ENCODE measurements at regions of chr1 and their contacts with region 1.

Region 1: GRCh38 chr1:86704458-86704971 is at the start of gene SH3GLB1:
- DNase-seq: peak; percentile 81 to 93 (median 91)
- H3K4me3 ChIP-seq: peak within 1 kb of the TSS; percentile 88
- H3K4me3 Mint-ChIP-seq: peak within 1 kb of the TSS; percentile 93 to 100 (median 99)
- H3K27ac ChIP-seq: peak within 1 kb of the TSS; percentile 90
- H3K27ac Mint-ChIP-seq: peak within 1 kb of the TSS; percentile 89 to 99 (median 99)
- H3K4me1 ChIP-seq: peaks cover 32% of the 10 kb centered on the region
- H3K4me1 Mint-ChIP-seq: peaks cover 46 to 66% (median 53%) of the 10 kb centered on the region in 3 donors
- H3K27me3 ChIP-seq: no peaks in the 10 kb centered on the region
- H3K27me3 Mint-ChIP-seq: no peaks in the 10 kb centered on the region
- total RNA-seq, gene SH3GLB1: 66.3 to 69.7 TPM

Region 2: DNA sequence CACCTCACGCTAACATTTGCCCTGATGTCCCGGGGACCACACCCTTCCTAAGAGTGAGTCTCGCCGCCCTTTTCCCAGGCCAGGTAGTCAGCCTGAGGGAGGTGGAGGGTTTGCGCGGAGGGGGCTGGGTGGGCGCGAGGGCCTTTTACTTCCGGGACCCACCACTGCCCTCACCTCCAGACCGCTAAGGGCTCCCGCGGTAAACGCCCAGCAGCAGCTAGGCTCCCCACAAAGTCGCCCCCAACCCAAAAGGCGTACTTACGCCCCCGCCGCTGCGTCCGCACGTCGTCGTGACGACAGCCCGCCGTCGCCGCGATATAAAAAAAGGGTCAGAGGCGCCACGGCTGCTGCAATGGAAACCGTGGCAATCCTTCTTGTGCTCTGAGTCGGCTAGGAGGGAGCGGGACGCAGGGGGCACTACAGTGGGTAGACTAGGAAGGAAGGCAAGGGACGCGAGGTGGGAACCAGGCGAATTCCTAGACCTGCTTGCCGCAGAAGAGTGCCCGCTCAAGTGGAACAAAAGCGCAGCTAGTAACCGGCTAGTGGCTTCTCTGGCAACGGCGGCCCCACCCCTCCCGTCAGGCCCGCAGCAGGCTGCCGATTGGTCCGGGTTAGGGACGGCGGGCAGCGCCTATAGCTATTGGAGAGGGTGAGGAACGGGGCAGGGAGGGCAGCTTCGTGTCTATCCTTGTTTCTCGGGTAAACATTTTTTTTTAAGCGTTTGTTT is 308.6 kb before region 1 on chr1 and contains the start of gene ODF2L:
- CTCF ChIA-PET with region 1: interaction called, 5 read pairs
- POLR2A ChIA-PET with region 1: interaction called, 15 read pairs
- DNase-seq: peak; percentile 83 to 93 (median 89)
- H3K4me3 ChIP-seq: peak within 1 kb of the TSS; percentile 79
- H3K4me3 Mint-ChIP-seq: peak within 1 kb of the TSS; percentile 95 to 100 (median 98)
- H3K27ac ChIP-seq: peak within 1 kb of the TSS; percentile 81
- H3K27ac Mint-ChIP-seq: peak within 1 kb of the TSS; percentile 85 to 99 (median 98)
- H3K4me1 ChIP-seq: peaks cover 21% of the 10 kb centered on the region
- H3K4me1 Mint-ChIP-seq: peaks cover 56 to 68% (median 59%) of the 10 kb centered on the region in 3 donors
- H3K27me3 ChIP-seq: no peaks in the 10 kb centered on the region
- H3K27me3 Mint-ChIP-seq: no peaks in the 10 kb centered on the region
- total RNA-seq, gene ODF2L: 27.6 to 30.1 TPM

Region 3: GRCh38 chr1:86563849-86564248 is 140.7 kb before region 1 on chr1:
- CTCF ChIA-PET with region 1: no interaction called
- POLR2A ChIA-PET with region 1: no interaction called
- DNase-seq: no peak
- H3K4me3 ChIP-seq: no peak overlapping the region
- H3K4me3 Mint-ChIP-seq: no peak overlapping the region
- H3K27ac ChIP-seq: no peak overlapping the region
- H3K27ac Mint-ChIP-seq: no peak overlapping the region
- H3K4me1 ChIP-seq: no peaks in the 10 kb centered on the region
- H3K4me1 Mint-ChIP-seq: no peaks in the 10 kb centered on the region
- H3K27me3 ChIP-seq: no peaks in the 10 kb centered on the region
- H3K27me3 Mint-ChIP-seq: peaks cover 8 to 40% of the 10 kb centered on the region in 2 donors

Region 4: GRCh38 chr1:86692636-86693035 is 11.9 kb before region 1 on chr1:
- CTCF ChIA-PET with region 1: interaction called, 12 read pairs
- POLR2A ChIA-PET with region 1: no interaction called
- DNase-seq: no peak
- H3K4me3 ChIP-seq: no peak overlapping the region
- H3K4me3 Mint-ChIP-seq: no peak overlapping the region
- H3K27ac ChIP-seq: no peak overlapping the region
- H3K27ac Mint-ChIP-seq: no peak overlapping the region
- H3K4me1 ChIP-seq: no peaks in the 10 kb centered on the region
- H3K4me1 Mint-ChIP-seq: no peaks in the 10 kb centered on the region
- H3K27me3 ChIP-seq: no peaks in the 10 kb centered on the region
- H3K27me3 Mint-ChIP-seq: peaks cover 1 to 3% of the 10 kb centered on the region in 2 donors

Region 5: DNA sequence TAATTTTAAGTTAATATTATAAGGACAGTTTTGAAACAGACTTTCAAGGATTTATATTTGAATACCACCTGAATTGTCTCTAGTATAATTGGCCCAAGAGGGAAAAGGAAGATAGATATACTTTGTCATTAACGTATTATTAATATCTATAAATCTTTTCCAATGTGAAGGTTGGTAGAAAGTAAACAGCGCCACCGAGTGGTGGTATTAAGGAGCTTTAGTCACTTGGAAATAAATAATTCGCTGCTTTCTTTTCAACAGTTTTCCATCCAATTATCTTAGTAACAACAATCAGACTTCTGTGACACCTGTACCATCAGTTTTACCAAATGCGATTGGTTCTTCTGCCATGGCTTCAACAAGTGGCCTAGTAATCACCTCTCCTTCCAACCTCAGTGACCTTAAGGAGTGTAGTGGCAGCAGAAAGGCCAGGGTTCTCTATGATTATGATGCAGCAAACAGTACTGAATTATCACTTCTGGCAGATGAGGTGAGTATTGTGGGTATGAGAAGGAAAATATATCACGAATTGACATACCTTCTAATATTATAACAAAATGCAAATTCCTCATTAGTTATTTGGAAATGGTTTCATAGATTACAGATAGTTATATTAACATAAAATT is 37.5 kb after region 1 on chr1:
- CTCF ChIA-PET with region 1: interaction called, 17 read pairs
- POLR2A ChIA-PET with region 1: interaction called, 8 read pairs
- DNase-seq: peak; percentile 20 to 58 (median 29)
- H3K4me3 ChIP-seq: no peak overlapping the region
- H3K4me3 Mint-ChIP-seq: no peak overlapping the region
- H3K27ac ChIP-seq: no peak overlapping the region
- H3K27ac Mint-ChIP-seq: peak overlapping the region in 1 of 8 donors; percentile 54
- H3K4me1 ChIP-seq: peaks cover 11% of the 10 kb centered on the region
- H3K4me1 Mint-ChIP-seq: peaks cover 5 to 7% (median 5%) of the 10 kb centered on the region in 3 donors
- H3K27me3 ChIP-seq: no peaks in the 10 kb centered on the region
- H3K27me3 Mint-ChIP-seq: no peaks in the 10 kb centered on the region

Region 6: DNA sequence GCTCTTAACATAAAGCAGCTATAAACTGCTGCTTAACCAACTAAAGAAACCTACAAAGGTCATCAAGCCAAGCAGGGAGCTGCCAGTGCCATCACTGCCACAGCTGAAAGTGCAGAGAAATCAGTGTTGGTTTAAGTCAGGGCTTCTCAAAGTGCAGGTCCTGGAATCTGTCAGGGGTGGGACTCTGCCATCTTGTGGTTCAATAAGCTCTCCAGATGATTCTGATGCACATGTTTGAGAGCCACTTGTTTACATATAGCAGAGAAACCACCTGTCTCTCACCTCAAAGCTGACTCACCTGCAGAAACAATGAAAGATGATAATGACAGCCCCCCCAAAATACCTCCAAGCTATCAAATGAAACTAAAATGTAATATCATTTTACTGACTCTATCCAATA is 49.2 kb after region 1 on chr1:
- CTCF ChIA-PET with region 1: interaction called, 14 read pairs
- POLR2A ChIA-PET with region 1: interaction called, 3 read pairs
- DNase-seq: no peak
- H3K4me3 ChIP-seq: no peak overlapping the region
- H3K4me3 Mint-ChIP-seq: no peak overlapping the region
- H3K27ac ChIP-seq: no peak overlapping the region
- H3K27ac Mint-ChIP-seq: no peak overlapping the region
- H3K4me1 ChIP-seq: no peaks in the 10 kb centered on the region
- H3K4me1 Mint-ChIP-seq: peaks cover 0 to 7% (median 1%) of the 10 kb centered on the region in 3 donors
- H3K27me3 ChIP-seq: peaks cover 3% of the 10 kb centered on the region
- H3K27me3 Mint-ChIP-seq: peaks cover 4 to 30% of the 10 kb centered on the region in 2 donors

Region 7: GRCh38 chr1:86913896-86914634 is 209.6 kb after region 1 on chr1 and contains the start of gene SELENOF:
- CTCF ChIA-PET with region 1: interaction called, 24 read pairs
- POLR2A ChIA-PET with region 1: interaction called, 46 read pairs
- DNase-seq: peak; percentile 97 to 100 (median 99)
- H3K4me3 ChIP-seq: peak within 1 kb of the TSS; percentile 96
- H3K4me3 Mint-ChIP-seq: no peak within 1 kb of the TSS
- H3K27ac ChIP-seq: peak within 1 kb of the TSS; percentile 91
- H3K27ac Mint-ChIP-seq: no peak within 1 kb of the TSS
- H3K4me1 ChIP-seq: peaks cover 41% of the 10 kb centered on the region
- H3K4me1 Mint-ChIP-seq: peaks cover 0 to 45% (median 42%) of the 10 kb centered on the region in 3 donors
- H3K27me3 ChIP-seq: no peaks in the 10 kb centered on the region
- H3K27me3 Mint-ChIP-seq: no peaks in the 10 kb centered on the region
- total RNA-seq, gene SELENOF: 157 to 158 TPM